Thyroid gland (tissue), 4 donors: ENCODE measurements at regions of chr6 and their contacts with region 1.

Region 1: GRCh38 chr6:40308533-40309306 is 278.4 kb downstream of the LRFN2 start:
- DNase-seq: peak; percentile 63 to 67
- H3K4me3 ChIP-seq: no peak overlapping the region
- H3K27ac ChIP-seq: no peak overlapping the region
- H3K4me1 ChIP-seq: peaks cover 0 to 4% of the 10 kb centered on the region in 2 donors
- H3K27me3 ChIP-seq: no peaks in the 10 kb centered on the region
- CTCF ChIP-seq: peak; percentile 79 to 96 (median 92)
- POLR2A ChIP-seq: no peak

Region 2: GRCh38 chr6:39377539-39377950 is 931.2 kb before region 1 on chr6:
- intact Hi-C with region 1: loop called (anchors 10 kb)
- DNase-seq: peak; percentile 61 to 63
- H3K4me3 ChIP-seq: no peak overlapping the region
- H3K27ac ChIP-seq: no peak overlapping the region
- H3K4me1 ChIP-seq: peaks cover 0 to 3% of the 10 kb centered on the region in 2 donors
- H3K27me3 ChIP-seq: no peaks in the 10 kb centered on the region
- CTCF ChIP-seq: peak in 5 of 6 experiments; percentile 19 to 76 (median 65)
- POLR2A ChIP-seq: no peak

Region 3: DNA sequence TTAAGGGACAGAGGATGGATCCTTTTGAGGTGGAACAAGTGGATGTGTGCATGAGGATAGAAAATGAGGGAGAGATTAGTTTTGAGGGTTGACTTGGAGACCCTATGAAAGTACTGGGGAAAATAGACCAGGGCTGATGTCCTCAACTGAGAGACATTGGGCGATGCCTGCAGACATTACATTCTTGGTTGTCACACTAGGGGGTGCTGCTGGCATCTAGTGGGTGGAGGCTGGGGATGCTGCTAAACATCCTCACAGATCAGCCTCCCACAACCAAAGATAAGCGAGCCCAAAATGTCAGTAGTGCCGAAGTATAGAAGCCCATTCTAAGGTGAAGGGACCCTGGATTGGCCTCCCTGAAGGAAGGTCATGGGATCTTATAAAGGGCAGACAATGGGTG is 437.8 kb before region 1 on chr6:
- intact Hi-C with region 1: loop called (anchors 10 kb)
- DNase-seq: no peak
- H3K4me3 ChIP-seq: no peak overlapping the region
- H3K27ac ChIP-seq: no peak overlapping the region
- H3K4me1 ChIP-seq: peaks cover 0 to under 1% of the 10 kb centered on the region in 2 donors
- H3K27me3 ChIP-seq: no peaks in the 10 kb centered on the region
- CTCF ChIP-seq: no peak
- POLR2A ChIP-seq: no peak

Region 4: DNA sequence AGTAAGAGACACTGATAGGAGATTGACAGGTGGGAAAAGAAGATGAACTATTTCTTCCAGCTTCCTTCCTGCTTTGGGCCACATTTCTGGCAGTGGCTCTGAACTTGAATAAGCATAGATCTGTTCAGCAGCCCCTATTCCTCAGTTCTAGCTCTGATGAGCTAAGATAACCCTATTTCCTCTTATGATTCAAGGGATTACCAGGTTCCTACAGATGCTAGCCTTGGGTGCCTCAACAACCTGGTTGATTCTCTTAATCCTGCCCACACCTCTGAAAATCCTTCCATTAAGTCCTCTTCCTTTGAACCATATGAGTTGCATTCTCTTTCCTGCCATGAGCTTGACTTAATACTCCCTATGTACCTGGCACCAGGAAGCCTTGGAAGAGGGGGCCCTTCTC is 324.7 kb before region 1 on chr6:
- intact Hi-C with region 1: loop called (anchors 2 kb)
- DNase-seq: no peak
- H3K4me3 ChIP-seq: no peak overlapping the region
- H3K27ac ChIP-seq: no peak overlapping the region
- H3K4me1 ChIP-seq: peaks cover 4 to 9% of the 10 kb centered on the region in 2 donors
- H3K27me3 ChIP-seq: no peaks in the 10 kb centered on the region
- CTCF ChIP-seq: no peak
- POLR2A ChIP-seq: no peak

Region 5: GRCh38 chr6:40359808-40360207 is 51.1 kb after region 1 on chr6:
- intact Hi-C with region 1: no loop called
- DNase-seq: peak; percentile 82 to 87
- H3K4me3 ChIP-seq: no peak overlapping the region
- H3K27ac ChIP-seq: peak overlapping the region in 1 of 3 donors; percentile 47
- H3K4me1 ChIP-seq: peaks cover 4 to 7% of the 10 kb centered on the region in 2 donors
- H3K27me3 ChIP-seq: no peaks in the 10 kb centered on the region
- CTCF ChIP-seq: no peak
- POLR2A ChIP-seq: no peak

Region 6: GRCh38 chr6:40545954-40546353 is 237.2 kb after region 1 on chr6:
- intact Hi-C with region 1: no loop called
- DNase-seq: no peak
- H3K4me3 ChIP-seq: no peak overlapping the region
- H3K27ac ChIP-seq: no peak overlapping the region
- H3K4me1 ChIP-seq: peaks cover 0 to 10% of the 10 kb centered on the region in 2 donors
- H3K27me3 ChIP-seq: no peaks in the 10 kb centered on the region
- CTCF ChIP-seq: no peak
- POLR2A ChIP-seq: no peak